B cell (primary cell): ENCODE measurements at regions of chr17 and their contacts with region 1.

Region 1: GRCh38 chr17:7989781-7990655 is 12.4 kb upstream of the GUCY2D start:
- DNase-seq: peak; percentile 93
- ATAC-seq: peak; percentile 94
- H3K4me3 ChIP-seq: peak overlapping the region in 4 of 5 experiments; percentile 65 to 70 (median 68)
- H3K4me3 Mint-ChIP-seq: peak overlapping the region; percentile 80
- H3K27ac ChIP-seq: peak overlapping the region; percentile 27 to 49
- H3K27ac Mint-ChIP-seq: peak overlapping the region; percentile 86
- H3K4me1 ChIP-seq: peaks cover 8 to 19% of the 10 kb centered on the region in 2 donors
- H3K4me1 Mint-ChIP-seq: peaks cover 23% of the 10 kb centered on the region
- H3K27me3 ChIP-seq: peaks cover 0 to 6% (median 0%) of the 10 kb centered on the region in 4 experiments
- H3K27me3 Mint-ChIP-seq: peaks cover 8% of the 10 kb centered on the region
- CTCF ChIP-seq: peak; percentile 99

Region 2: DNA sequence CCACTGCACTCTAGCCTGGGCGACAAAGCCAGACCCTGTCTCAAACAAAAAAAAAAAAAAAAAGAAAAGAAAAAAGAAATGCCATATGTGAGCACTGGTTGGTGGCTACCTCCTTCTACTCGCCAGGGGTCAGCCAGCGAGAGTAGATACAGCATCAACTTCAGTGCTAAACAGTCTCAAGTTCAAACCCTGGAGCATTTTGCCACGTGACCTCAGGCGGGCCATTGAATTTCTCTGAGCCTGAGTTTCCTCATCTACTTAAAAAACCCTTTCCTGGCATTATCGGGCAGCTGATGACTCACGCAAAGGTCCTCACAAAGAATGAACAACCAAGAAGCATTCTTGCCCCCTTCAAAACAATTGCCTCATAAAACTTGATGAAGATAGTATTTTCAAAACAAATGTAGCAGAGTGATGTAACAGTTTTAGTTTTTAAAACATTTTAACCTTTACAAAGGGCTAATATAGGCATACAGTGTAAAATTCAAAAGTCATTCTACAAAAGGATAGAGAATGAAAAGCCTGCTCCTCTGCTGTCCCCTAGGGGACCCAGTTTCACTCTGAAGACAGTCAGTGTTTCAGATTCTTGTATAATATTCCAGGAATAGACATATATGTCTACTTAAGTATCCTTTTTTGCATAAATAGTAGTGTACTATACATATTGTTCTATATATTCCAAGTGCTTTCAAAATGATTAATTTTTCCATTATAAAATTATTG is 244.1 kb before region 1 on chr17:
- CTCF ChIA-PET with region 1: interaction called, 43 read pairs
- POLR2A ChIA-PET with region 1: no interaction called
- intact Hi-C with region 1: loop called (anchors 1 kb)
- DNase-seq: no peak
- ATAC-seq: no peak
- H3K4me3 ChIP-seq: no peak overlapping the region
- H3K4me3 Mint-ChIP-seq: no peak overlapping the region
- H3K27ac ChIP-seq: no peak overlapping the region
- H3K27ac Mint-ChIP-seq: no peak overlapping the region
- H3K4me1 ChIP-seq: no peaks in the 10 kb centered on the region
- H3K4me1 Mint-ChIP-seq: no peaks in the 10 kb centered on the region
- H3K27me3 ChIP-seq: no peaks in the 10 kb centered on the region
- H3K27me3 Mint-ChIP-seq: peaks cover 25% of the 10 kb centered on the region
- CTCF ChIP-seq: no peak

Region 3: GRCh38 chr17:7856883-7857723 is 132.9 kb before region 1 on chr17 and contains the start of gene NAA38:
- CTCF ChIA-PET with region 1: interaction called, 144 read pairs
- POLR2A ChIA-PET with region 1: interaction called, 4 read pairs
- intact Hi-C with region 1: loop called (anchors 1 kb)
- DNase-seq: peak; percentile 99
- ATAC-seq: peak; percentile 82
- H3K4me3 ChIP-seq: peak within 1 kb of the TSS; percentile 57 to 92 (median 85)
- H3K4me3 Mint-ChIP-seq: no peak within 1 kb of the TSS
- H3K27ac ChIP-seq: peak within 1 kb of the TSS; percentile 85 to 90
- H3K27ac Mint-ChIP-seq: no peak within 1 kb of the TSS
- H3K4me1 ChIP-seq: peaks cover 20 to 32% of the 10 kb centered on the region in 2 donors
- H3K4me1 Mint-ChIP-seq: peaks cover 5% of the 10 kb centered on the region
- H3K27me3 ChIP-seq: no peaks in the 10 kb centered on the region
- H3K27me3 Mint-ChIP-seq: no peaks in the 10 kb centered on the region
- CTCF ChIP-seq: no peak
- total RNA-seq, gene NAA38: 20.0 and 22.0 TPM in 2 replicates

Region 4: GRCh38 chr17:7915611-7916382 is 74.2 kb before region 1 on chr17 and contains the start of gene RNF227:
- CTCF ChIA-PET with region 1: interaction called, 284 read pairs
- POLR2A ChIA-PET with region 1: interaction called, 13 read pairs
- intact Hi-C with region 1: loop called (anchors 1 kb)
- DNase-seq: peak; percentile 93
- ATAC-seq: peak; percentile 82
- H3K4me3 ChIP-seq: peak within 1 kb of the TSS; percentile 9 to 81 (median 76)
- H3K4me3 Mint-ChIP-seq: peak within 1 kb of the TSS; percentile 93
- H3K27ac ChIP-seq: peak within 1 kb of the TSS; percentile 69 to 75
- H3K27ac Mint-ChIP-seq: peak within 1 kb of the TSS; percentile 93
- H3K4me1 ChIP-seq: peaks cover 16 to 20% of the 10 kb centered on the region in 2 donors
- H3K4me1 Mint-ChIP-seq: peaks cover 24% of the 10 kb centered on the region
- H3K27me3 ChIP-seq: no peaks in the 10 kb centered on the region
- H3K27me3 Mint-ChIP-seq: no peaks in the 10 kb centered on the region
- CTCF ChIP-seq: no peak
- total RNA-seq, gene RNF227: 3.8 and 4.3 TPM in 2 replicates

Region 5: DNA sequence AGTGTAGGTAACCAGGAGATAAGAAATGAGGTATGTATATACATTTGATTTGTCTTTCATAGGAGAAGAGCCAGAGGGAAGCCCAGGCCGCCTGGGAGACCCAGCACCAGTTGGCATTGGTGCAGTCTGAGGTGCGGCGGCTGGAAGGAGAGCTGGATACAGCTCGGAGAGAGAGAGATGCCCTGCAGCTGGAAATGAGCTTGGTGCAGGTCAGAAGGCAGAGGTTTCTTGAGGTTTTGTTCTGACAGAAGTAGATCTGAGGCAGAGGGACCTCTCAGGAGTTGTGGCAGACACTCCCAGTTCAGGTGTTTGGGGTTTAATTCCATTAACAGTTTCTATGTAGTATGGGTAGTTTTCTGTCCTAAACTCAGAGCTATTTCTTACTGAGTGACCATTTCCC is 50.0 kb before region 1 on chr17:
- CTCF ChIA-PET with region 1: interaction called, 48 read pairs
- POLR2A ChIA-PET with region 1: no interaction called
- intact Hi-C with region 1: no loop called
- DNase-seq: no peak
- ATAC-seq: no peak
- H3K4me3 ChIP-seq: no peak overlapping the region
- H3K4me3 Mint-ChIP-seq: no peak overlapping the region
- H3K27ac ChIP-seq: no peak overlapping the region
- H3K27ac Mint-ChIP-seq: no peak overlapping the region
- H3K4me1 ChIP-seq: peaks cover 0 to 4% of the 10 kb centered on the region in 2 donors
- H3K4me1 Mint-ChIP-seq: no peaks in the 10 kb centered on the region
- H3K27me3 ChIP-seq: no peaks in the 10 kb centered on the region
- H3K27me3 Mint-ChIP-seq: no peaks in the 10 kb centered on the region
- CTCF ChIP-seq: no peak